ENCODE measurements at regions of chr5 and their contacts with region 1.

Region 1: GRCh38 chr5:115841382-115842088 is at the starts of genes AP3S1 and ATG12:
- DNase-seq: peak; percentile 91
- ATAC-seq: peak; percentile 89
- H3K4me3 ChIP-seq: peak within 1 kb of the TSS; percentile 82
- H3K27ac ChIP-seq: peak within 1 kb of the TSS; percentile 99
- H3K4me1 ChIP-seq: peaks cover 5% of the 10 kb centered on the region
- H3K27me3 ChIP-seq: no peaks in the 10 kb centered on the region
- CTCF ChIP-seq: no peak
- POLR2A ChIP-seq: peak; percentile 91
- RAD21 ChIP-seq: no peak
- total RNA-seq, gene AP3S1: 21.9 and 93.9 TPM in 2 replicates
- total RNA-seq, gene ATG12: 95.7 and 117 TPM in 2 replicates

Region 2: GRCh38 chr5:115309751-115310370 is 531.7 kb before region 1 on chr5:
- CTCF ChIA-PET with region 1: no interaction called
- POLR2A ChIA-PET with region 1: no interaction called
- dilution Hi-C with region 1: no loop called
- in situ Hi-C with region 1: no loop called
- intact Hi-C with region 1: loop called (anchors 5 kb)
- DNase-seq: peak; percentile 58
- ATAC-seq: peak; percentile 72
- H3K4me3 ChIP-seq: no peak overlapping the region
- H3K27ac ChIP-seq: no peak overlapping the region
- H3K4me1 ChIP-seq: no peaks in the 10 kb centered on the region
- H3K27me3 ChIP-seq: peaks cover 3% of the 10 kb centered on the region
- CTCF ChIP-seq: peak; percentile 74
- POLR2A ChIP-seq: no peak
- RAD21 ChIP-seq: peak; percentile 79

Region 3: DNA sequence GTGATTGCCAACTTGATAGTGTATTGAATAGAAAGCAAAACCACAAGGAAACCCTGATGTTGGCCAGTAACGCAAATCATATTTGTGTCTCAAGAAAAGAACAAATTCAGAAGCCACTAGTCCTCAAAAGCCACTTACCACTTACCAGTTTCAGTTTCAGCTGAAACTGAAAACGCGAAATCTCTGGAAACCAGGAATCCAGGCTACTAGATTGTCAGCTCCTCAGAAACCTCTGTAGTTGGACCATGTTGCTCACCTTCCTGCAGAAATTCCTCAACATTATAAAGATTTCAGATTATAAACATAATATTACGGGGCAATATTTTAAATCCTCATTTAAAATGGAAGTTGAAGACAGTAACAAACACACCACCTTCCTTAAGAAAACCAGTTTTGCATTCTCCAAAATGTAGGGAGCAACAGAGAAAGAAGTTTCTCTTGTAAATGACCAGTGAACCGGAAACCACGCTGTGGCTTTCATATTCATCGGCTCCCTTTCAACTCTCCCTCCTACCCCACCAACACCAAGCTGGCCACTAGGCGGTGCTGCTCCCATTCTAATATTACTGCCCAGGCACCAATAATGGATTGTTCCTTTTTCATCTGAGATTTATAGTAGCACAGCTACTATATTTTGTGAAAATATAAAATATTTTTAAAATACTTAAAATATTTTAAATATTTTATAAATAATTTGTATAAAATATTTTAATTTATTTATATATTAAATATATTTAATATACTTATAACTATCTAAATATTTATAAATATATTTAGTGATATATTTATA is 207.0 kb before region 1 on chr5:
- CTCF ChIA-PET with region 1: interaction called, 5 read pairs
- POLR2A ChIA-PET with region 1: no interaction called
- dilution Hi-C with region 1: no loop called
- in situ Hi-C with region 1: loop called (anchors 5 kb)
- intact Hi-C with region 1: loop called (anchors 1 kb)
- DNase-seq: peak; percentile 80
- ATAC-seq: peak; percentile 100
- H3K4me3 ChIP-seq: peak overlapping the region; percentile 41
- H3K27ac ChIP-seq: no peak overlapping the region
- H3K4me1 ChIP-seq: no peaks in the 10 kb centered on the region
- H3K27me3 ChIP-seq: peaks cover 3% of the 10 kb centered on the region
- CTCF ChIP-seq: peak; percentile 95
- POLR2A ChIP-seq: no peak
- RAD21 ChIP-seq: peak; percentile 94

Region 4: GRCh38 chr5:116032094-116032517 is 190.6 kb after region 1 on chr5 and contains the start of gene ARL14EPL:
- CTCF ChIA-PET with region 1: no interaction called
- POLR2A ChIA-PET with region 1: no interaction called
- dilution Hi-C with region 1: no loop called
- in situ Hi-C with region 1: no loop called
- intact Hi-C with region 1: loop called (anchors 2 kb)
- DNase-seq: peak; percentile 92
- ATAC-seq: peak; percentile 98
- H3K4me3 ChIP-seq: no peak within 1 kb of the TSS
- H3K27ac ChIP-seq: no peak within 1 kb of the TSS
- H3K4me1 ChIP-seq: no peaks in the 10 kb centered on the region
- H3K27me3 ChIP-seq: no peaks in the 10 kb centered on the region
- CTCF ChIP-seq: peak; percentile 67
- POLR2A ChIP-seq: no peak
- RAD21 ChIP-seq: peak; percentile 70
- total RNA-seq, gene ARL14EPL: not detected in 2 replicates

Region 5: GRCh38 chr5:116152177-116152576 is 310.6 kb after region 1 on chr5:
- CTCF ChIA-PET with region 1: no interaction called
- POLR2A ChIA-PET with region 1: no interaction called
- dilution Hi-C with region 1: no loop called
- in situ Hi-C with region 1: no loop called
- intact Hi-C with region 1: no loop called
- DNase-seq: no peak
- ATAC-seq: no peak
- H3K4me3 ChIP-seq: no peak overlapping the region
- H3K27ac ChIP-seq: no peak overlapping the region
- H3K4me1 ChIP-seq: no peaks in the 10 kb centered on the region
- H3K27me3 ChIP-seq: no peaks in the 10 kb centered on the region
- CTCF ChIP-seq: no peak
- POLR2A ChIP-seq: no peak
- RAD21 ChIP-seq: no peak

Measured in IMR-90 (cell line).